ENCODE measurements at regions of chrX and their contacts with region 1.

Region 1: GRCh38 chrX:18425199-18426003 is at the start of gene CDKL5:
- DNase-seq: peak; percentile 91 to 99 (median 94)

Region 2: DNA sequence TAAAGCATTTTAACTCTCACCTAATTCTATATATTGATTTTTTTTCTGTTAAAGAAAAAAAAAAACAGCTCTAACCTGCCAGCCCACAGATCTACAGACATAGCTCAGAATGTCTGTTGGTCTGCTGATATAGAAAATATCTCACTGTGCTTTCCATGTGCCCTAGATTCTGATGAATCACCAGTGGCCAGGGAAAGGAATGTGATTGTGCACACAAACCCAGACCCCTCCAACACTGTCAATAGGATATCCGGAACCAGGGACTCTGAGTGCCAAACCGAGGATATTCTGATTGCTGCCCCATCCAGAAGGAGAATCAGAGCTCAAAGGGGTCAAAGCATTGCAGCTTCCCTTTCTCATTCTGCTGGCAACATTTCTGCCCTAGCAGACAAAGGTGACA is 700.2 kb before region 1 on chrX:
- intact Hi-C with region 1: no loop called
- DNase-seq: no peak

Region 3: DNA sequence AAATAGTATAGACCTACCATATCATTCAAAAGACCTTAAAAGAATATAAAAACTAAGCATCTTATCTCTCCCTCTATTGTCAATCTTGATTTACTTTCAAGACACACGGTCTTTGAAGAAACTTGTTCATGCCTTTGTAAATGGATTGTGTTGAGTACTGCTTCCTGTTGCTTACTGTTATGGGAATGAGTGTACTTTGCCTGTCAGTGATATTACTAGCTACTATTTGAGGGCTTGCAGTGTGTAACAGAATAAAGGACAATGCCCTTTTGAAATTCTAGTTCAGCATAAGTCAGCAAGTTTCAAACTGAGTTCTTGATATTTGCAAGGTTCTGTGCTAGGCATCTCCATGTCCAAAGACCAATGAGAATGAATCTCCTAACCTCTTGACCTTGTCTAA is 36.0 kb after region 1 on chrX:
- intact Hi-C with region 1: no loop called
- DNase-seq: no peak

Region 4: DNA sequence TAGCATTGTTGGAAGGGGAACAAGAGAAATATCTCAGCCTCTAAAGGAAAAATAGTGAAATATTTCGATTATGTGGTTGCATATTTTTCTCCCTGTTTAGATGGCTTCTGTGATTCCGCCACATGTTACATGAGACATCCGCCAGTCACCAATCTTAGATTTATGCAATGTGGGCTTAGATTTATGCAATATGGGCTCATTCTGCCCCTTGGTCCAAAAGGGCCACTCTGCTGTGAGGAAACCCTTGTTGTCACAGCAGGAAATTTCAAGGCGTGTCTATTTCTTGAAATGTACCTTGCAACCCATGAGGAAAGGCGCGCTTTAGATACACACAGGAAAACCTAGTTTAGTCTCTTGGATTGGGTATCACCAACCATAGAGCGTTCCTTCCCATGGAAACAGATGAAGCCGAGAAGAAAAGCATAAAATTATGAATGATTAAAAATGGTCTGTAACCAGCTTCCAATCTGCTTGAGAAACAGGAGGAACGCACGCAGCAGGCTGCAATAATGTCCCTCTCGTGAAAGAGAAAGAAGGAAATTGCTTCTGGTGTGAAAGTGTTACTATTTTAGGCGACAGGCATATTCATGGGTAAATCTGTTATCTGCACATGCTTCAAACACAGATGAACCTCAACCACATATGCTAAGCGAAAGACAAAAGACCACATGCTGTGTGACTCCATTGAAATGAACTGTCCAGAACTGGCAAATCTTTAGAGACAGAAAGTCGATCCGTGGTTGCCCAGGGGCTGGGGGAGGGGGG is 242.9 kb after region 1 on chrX:
- intact Hi-C with region 1: loop called (anchors 10 kb)
- DNase-seq: no peak

Measured in posterior cingulate gyrus (tissue), 11 donors.